Right ventricle myocardium superior (tissue), 1 donor: ENCODE measurements at regions of chr17 and their contacts with region 1.

Region 1: DNA sequence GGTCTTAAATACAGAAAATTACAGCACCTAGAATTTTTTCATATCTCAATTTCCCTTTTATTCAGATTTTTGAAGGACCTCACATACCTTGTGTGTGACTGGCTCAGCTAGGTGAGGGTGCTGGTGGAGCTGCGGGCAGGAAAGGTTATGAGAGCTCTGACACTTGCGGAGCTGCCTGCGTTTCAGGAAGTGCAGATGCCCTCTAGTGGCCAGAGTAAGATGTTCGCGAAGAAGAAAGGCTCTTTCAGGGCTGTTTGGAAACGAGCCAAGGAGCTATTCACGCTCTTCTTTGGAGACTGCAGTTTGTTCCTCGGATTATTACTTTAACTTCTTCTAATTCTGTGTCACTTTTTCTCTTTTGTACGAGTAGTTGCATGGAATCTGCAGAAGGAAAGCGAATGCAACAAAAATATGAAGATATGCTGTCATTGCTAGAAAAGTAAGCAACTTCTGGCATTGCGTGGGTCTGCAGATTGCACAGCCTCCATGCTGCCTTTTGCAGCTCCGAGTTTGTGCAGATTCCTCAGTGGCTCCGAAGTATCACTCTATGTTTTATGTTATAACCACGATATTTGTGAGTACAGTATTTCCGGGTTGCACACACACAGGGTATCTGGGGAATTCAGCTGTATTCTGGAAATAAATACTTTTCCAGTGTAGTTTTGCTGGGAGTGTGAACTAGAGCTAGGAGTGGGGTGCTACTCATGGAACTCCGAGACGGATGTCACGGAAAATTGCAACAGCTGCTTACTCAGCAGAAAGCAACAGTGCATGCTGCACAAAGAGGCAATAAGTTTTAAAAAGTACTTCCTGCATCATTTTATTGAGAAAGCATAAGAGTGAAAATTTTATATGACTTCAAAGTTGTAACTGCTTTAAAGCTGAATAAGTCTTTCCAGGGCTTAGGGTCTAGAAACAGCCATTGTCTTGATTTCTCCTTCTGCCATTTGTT is 46.3 kb downstream of the DNAH9 start:
- DNase-seq: no peak
- ATAC-seq: peak; percentile 76

Region 2: GRCh38 chr17:10875979-10876555 is 768.5 kb before region 1 on chr17:
- intact Hi-C with region 1: loop called (anchors 10 kb)
- DNase-seq: peak; percentile 45
- ATAC-seq: no peak

Region 3: GRCh38 chr17:11786711-11787438 is 142.3 kb after region 1 on chr17:
- intact Hi-C with region 1: no loop called
- DNase-seq: no peak
- ATAC-seq: no peak

Region 4: GRCh38 chr17:11935734-11936406 is 291.3 kb after region 1 on chr17:
- intact Hi-C with region 1: loop called (anchors 10 kb)
- DNase-seq: no peak
- ATAC-seq: no peak